ENCODE measurements at regions of chr6 and their contacts with region 1.

Region 1: GRCh38 chr6:12483712-12484111 is 193.6 kb downstream of the EDN1 start:
- DNase-seq: peak; percentile 24
- CTCF ChIP-seq: no peak

Region 2: GRCh38 chr6:12467706-12468670 is 15.7 kb before region 1 on chr6:
- CTCF ChIA-PET with region 1: interaction called, 10 read pairs
- POLR2A ChIA-PET with region 1: no interaction called
- DNase-seq: no peak
- CTCF ChIP-seq: no peak

Measured in GM10248 (cell line).